ENCODE measurements at regions of chr1 and their contacts with region 1.

Region 1: GRCh38 chr1:87131809-87132283 is 196.8 kb upstream of the LMO4 start:
- DNase-seq: peak; percentile 81 to 90 (median 83)
- ATAC-seq: peak; percentile 74 to 93 (median 90)
- H3K4me3 ChIP-seq: peak overlapping the region; percentile 27 to 66 (median 48)
- H3K27ac ChIP-seq: peak overlapping the region in 11 of 12 donors; percentile 5 to 88 (median 67)
- H3K4me1 ChIP-seq: peaks cover 0 to 45% (median 12%) of the 10 kb centered on the region in 12 donors
- H3K27me3 ChIP-seq: peaks cover 0 to 2% (median 0%) of the 10 kb centered on the region in 9 donors
- CTCF ChIP-seq: peak; percentile 87 to 98 (median 92)
- POLR2A ChIP-seq: no peak

Region 2: GRCh38 chr1:86998727-86999126 is 133.1 kb before region 1 on chr1:
- intact Hi-C with region 1: no loop called
- DNase-seq: no peak
- ATAC-seq: no peak
- H3K4me3 ChIP-seq: no peak overlapping the region
- H3K27ac ChIP-seq: no peak overlapping the region
- H3K4me1 ChIP-seq: no peaks in the 10 kb centered on the region
- H3K27me3 ChIP-seq: no peaks in the 10 kb centered on the region
- CTCF ChIP-seq: no peak
- POLR2A ChIP-seq: no peak

Region 3: GRCh38 chr1:87292684-87293493 is 161.0 kb after region 1 on chr1:
- intact Hi-C with region 1: loop called in 4 of 10 experiments (anchors 5 to 10 kb)
- DNase-seq: peak in 4 of 5 donors; percentile 32 to 62 (median 46)
- ATAC-seq: peak in 3 of 4 donors; percentile 59 to 67 (median 63)
- H3K4me3 ChIP-seq: no peak overlapping the region
- H3K27ac ChIP-seq: no peak overlapping the region
- H3K4me1 ChIP-seq: no peaks in the 10 kb centered on the region
- H3K27me3 ChIP-seq: peaks cover 0 to 7% (median 0%) of the 10 kb centered on the region in 9 donors
- CTCF ChIP-seq: peak; percentile 65 to 91 (median 78)
- POLR2A ChIP-seq: no peak

Region 4: DNA sequence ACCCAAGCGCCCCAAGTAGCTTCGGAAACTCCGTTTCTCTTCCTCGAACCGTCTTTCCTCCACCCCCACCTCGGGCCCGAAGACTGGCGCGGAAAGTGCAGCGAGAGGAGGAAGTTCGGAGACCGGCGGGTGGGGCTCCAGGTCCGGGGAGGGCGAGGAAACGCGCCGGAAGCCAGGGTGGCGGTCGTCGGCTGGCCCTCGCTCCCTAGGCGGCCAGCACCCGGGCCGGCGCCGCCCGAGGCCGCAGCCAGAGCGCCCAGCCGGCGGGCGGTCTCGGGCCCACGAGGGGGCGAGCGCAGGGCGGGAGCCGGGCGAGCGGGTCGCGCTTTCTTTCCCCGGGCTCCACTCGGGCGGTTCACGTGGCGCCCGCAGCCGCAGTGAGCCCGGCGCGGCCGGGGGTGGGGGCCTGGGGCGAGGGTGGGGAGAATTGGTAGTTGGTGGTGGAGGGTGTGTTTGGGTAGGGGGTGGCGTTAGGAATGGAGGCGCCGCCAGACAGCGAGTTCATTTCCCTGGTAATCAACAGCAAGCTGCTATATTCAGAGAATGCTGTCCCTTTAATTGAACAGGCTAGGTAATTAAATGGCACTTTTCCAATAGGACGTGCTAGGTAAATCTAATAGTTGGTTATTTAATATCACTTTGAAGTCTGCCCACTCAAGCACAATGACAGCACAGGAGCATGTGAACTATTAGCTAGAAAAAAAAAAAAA is 203.5 kb after region 1 on chr1:
- intact Hi-C with region 1: loop called in 1 of 10 experiments (anchors 10 kb)
- DNase-seq: peak; percentile 75 to 90 (median 83)
- ATAC-seq: peak; percentile 17 to 80 (median 76)
- H3K4me3 ChIP-seq: peak overlapping the region; percentile 40 to 88 (median 74)
- H3K27ac ChIP-seq: peak overlapping the region; percentile 20 to 88 (median 80)
- H3K4me1 ChIP-seq: peaks cover 3 to 65% (median 37%) of the 10 kb centered on the region in 12 donors
- H3K27me3 ChIP-seq: no peaks in the 10 kb centered on the region
- CTCF ChIP-seq: peak in 10 of 12 donors; percentile 13 to 65 (median 46)
- POLR2A ChIP-seq: no peak

Region 5: GRCh38 chr1:88061492-88062177 is 929.8 kb after region 1 on chr1:
- intact Hi-C with region 1: loop called in 3 of 10 experiments (anchors 5 to 10 kb)
- DNase-seq: peak in 3 of 5 donors; percentile 12 to 54 (median 41)
- ATAC-seq: peak in 3 of 4 donors; percentile 45 to 89 (median 81)
- H3K4me3 ChIP-seq: no peak overlapping the region
- H3K27ac ChIP-seq: no peak overlapping the region
- H3K4me1 ChIP-seq: peaks cover 0 to 5% (median 0%) of the 10 kb centered on the region in 12 donors
- H3K27me3 ChIP-seq: no peaks in the 10 kb centered on the region
- CTCF ChIP-seq: peak; percentile 30 to 71 (median 53)
- POLR2A ChIP-seq: no peak

Region 6: DNA sequence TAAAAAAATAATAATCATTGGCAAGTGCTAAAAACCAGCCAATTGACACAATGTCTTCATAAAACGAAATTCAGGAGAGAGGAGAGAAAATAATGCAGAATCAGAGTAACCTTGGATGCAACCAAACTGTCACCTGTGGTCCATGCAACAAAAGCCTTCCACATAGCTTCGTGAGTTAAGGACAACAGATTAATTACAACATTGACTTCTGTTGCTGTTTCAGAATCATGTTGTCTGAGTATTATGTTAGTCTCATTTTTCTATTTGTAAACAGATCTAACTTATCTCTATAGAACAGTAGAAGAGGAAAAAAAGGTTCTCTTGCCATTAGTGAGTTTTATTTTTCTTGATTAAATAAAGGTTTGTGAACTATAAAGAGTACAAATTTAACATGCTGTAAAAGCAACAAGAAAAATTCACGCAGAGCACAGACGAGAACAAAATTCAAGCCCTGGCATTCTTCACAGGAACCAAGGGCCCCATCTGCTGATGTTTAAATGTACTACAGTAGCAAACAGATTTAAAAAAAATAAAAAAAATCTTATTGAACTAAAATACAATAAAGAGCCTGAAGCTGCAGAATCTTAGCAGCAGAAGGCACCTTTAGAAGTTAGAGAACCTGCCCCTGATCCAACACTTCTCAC is 1171.1 kb after region 1 on chr1:
- intact Hi-C with region 1: loop called in 2 of 10 experiments (anchors 5 to 10 kb)
- DNase-seq: peak in 1 of 5 donors; percentile 16
- ATAC-seq: no peak
- H3K4me3 ChIP-seq: no peak overlapping the region
- H3K27ac ChIP-seq: no peak overlapping the region
- H3K4me1 ChIP-seq: peaks cover 0 to 2% (median 0%) of the 10 kb centered on the region in 12 donors
- H3K27me3 ChIP-seq: no peaks in the 10 kb centered on the region
- CTCF ChIP-seq: peak; percentile 11 to 60 (median 51)
- POLR2A ChIP-seq: no peak

Measured in heart left ventricle (tissue), 16 donors.